Ovary (tissue), 10 donors: ENCODE measurements at regions of chr3 and their contacts with region 1.

Region 1: GRCh38 chr3:9946112-9947024 is 5.8 kb downstream of the PRRT3 start:
- DNase-seq: peak; percentile 88 to 94 (median 89)
- H3K4me3 ChIP-seq: peak overlapping the region; percentile 66
- H3K27ac ChIP-seq: peak overlapping the region; percentile 11 to 57
- H3K4me1 ChIP-seq: peaks cover 5% of the 10 kb centered on the region
- H3K27me3 ChIP-seq: no peaks in the 10 kb centered on the region
- CTCF ChIP-seq: peak; percentile 56 to 87 (median 82)
- EP300 ChIP-seq: no peak
- POLR2A ChIP-seq: peak; percentile 38

Region 2: GRCh38 chr3:9932843-9933560 is 13.4 kb before region 1 on chr3:
- intact Hi-C with region 1: loop called in 1 of 4 experiments (anchors 2 kb)
- DNase-seq: peak; percentile 64 to 90 (median 78)
- H3K4me3 ChIP-seq: peak overlapping the region; percentile 51
- H3K27ac ChIP-seq: peak overlapping the region; percentile 77 to 87
- H3K4me1 ChIP-seq: peaks cover 12% of the 10 kb centered on the region
- H3K27me3 ChIP-seq: no peaks in the 10 kb centered on the region
- CTCF ChIP-seq: peak in 2 of 3 donors; percentile 83 to 90
- EP300 ChIP-seq: no peak
- POLR2A ChIP-seq: no peak

Region 3: GRCh38 chr3:10010486-10011465 is 64.4 kb after region 1 on chr3:
- intact Hi-C with region 1: loop called in 1 of 4 experiments (anchors 10 kb)
- DNase-seq: peak; percentile 96 to 98 (median 97)
- H3K4me3 ChIP-seq: peak overlapping the region; percentile 44
- H3K27ac ChIP-seq: no peak overlapping the region
- H3K4me1 ChIP-seq: peaks cover 9% of the 10 kb centered on the region
- H3K27me3 ChIP-seq: no peaks in the 10 kb centered on the region
- CTCF ChIP-seq: no peak
- EP300 ChIP-seq: no peak
- POLR2A ChIP-seq: no peak